Activated CD4-positive, alpha-beta memory T cell treated with anti-CD3 and anti-CD28 coated beads for 36 hours (primary cell): ENCODE measurements at regions of chr2 and their contacts with region 1.

Region 1: GRCh38 chr2:100381240-100381639 is 36.2 kb downstream of the CHST10 start:
- DNase-seq: peak; percentile 79
- H3K4me3 Mint-ChIP-seq: no peak overlapping the region
- H3K27ac Mint-ChIP-seq: no peak overlapping the region
- H3K4me1 Mint-ChIP-seq: peaks cover 2% of the 10 kb centered on the region
- H3K27me3 Mint-ChIP-seq: peaks cover 5% of the 10 kb centered on the region

Region 2: DNA sequence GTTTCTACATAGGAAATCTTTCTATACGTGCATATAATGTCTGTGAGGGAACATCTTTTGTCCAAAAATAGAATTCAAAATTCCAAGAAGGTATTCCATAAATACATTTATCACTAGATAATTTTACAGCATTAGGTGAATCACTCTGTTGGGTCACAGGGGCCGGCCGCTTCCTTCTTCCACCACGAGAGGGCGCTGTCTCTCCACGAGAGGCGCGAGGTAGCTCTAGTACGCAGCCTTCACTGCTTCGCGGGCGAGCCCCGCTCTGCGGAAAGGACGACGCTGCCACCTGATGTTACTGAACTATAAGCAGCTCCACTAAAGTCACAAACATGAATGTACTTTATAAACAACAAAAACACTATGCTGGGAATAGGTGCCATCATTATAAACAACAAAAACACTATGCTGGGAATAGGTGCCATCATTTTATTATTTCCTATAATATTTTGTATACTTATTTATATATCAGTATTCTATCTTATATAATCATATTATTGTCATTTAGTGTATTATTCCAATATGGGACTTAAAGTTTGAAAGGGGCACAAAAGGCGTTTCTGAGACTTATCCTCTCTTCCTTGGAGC is 822.1 kb before region 1 on chr2:
- CTCF ChIA-PET with region 1: interaction called, 20 read pairs
- POLR2A ChIA-PET with region 1: no interaction called
- intact Hi-C with region 1: loop called (anchors 5 kb)
- DNase-seq: peak; percentile 90
- H3K4me3 Mint-ChIP-seq: no peak overlapping the region
- H3K27ac Mint-ChIP-seq: no peak overlapping the region
- H3K4me1 Mint-ChIP-seq: peaks cover 4% of the 10 kb centered on the region
- H3K27me3 Mint-ChIP-seq: no peaks in the 10 kb centered on the region

Region 3: GRCh38 chr2:100262555-100263320 is 118.5 kb before region 1 on chr2:
- CTCF ChIA-PET with region 1: interaction called, 137 read pairs
- POLR2A ChIA-PET with region 1: no interaction called
- intact Hi-C with region 1: loop called (anchors 1 kb)
- DNase-seq: peak; percentile 72
- H3K4me3 Mint-ChIP-seq: no peak overlapping the region
- H3K27ac Mint-ChIP-seq: no peak overlapping the region
- H3K4me1 Mint-ChIP-seq: no peaks in the 10 kb centered on the region
- H3K27me3 Mint-ChIP-seq: no peaks in the 10 kb centered on the region

Region 4: GRCh38 chr2:100291120-100291970 is 89.9 kb before region 1 on chr2:
- CTCF ChIA-PET with region 1: interaction called, 11 read pairs
- POLR2A ChIA-PET with region 1: no interaction called
- intact Hi-C with region 1: no loop called
- DNase-seq: peak; percentile 72
- H3K4me3 Mint-ChIP-seq: no peak overlapping the region
- H3K27ac Mint-ChIP-seq: no peak overlapping the region
- H3K4me1 Mint-ChIP-seq: no peaks in the 10 kb centered on the region
- H3K27me3 Mint-ChIP-seq: peaks cover 7% of the 10 kb centered on the region

Region 5: DNA sequence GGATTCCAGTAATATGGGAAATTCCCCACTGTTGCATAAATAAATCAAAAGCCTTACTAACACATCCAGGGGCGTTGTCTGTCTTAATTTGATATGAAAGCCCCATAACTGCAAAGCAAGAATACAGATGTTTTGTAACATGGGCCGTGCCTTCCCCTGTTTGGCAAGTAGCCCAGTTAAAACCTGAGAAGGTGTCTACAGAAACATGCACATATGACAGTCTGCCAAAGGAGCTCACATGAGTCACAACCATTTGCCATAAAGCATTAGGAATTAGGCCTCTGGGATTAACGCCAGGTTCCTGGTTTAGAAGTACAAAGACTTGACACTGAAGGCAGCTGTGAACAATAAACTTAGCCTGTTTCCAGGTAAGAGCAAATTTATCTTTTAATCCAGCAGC is 15.8 kb before region 1 on chr2:
- CTCF ChIA-PET with region 1: interaction called, 22 read pairs
- POLR2A ChIA-PET with region 1: no interaction called
- intact Hi-C with region 1: no loop called
- DNase-seq: no peak
- H3K4me3 Mint-ChIP-seq: no peak overlapping the region
- H3K27ac Mint-ChIP-seq: no peak overlapping the region
- H3K4me1 Mint-ChIP-seq: no peaks in the 10 kb centered on the region
- H3K27me3 Mint-ChIP-seq: peaks cover 14% of the 10 kb centered on the region

Region 6: DNA sequence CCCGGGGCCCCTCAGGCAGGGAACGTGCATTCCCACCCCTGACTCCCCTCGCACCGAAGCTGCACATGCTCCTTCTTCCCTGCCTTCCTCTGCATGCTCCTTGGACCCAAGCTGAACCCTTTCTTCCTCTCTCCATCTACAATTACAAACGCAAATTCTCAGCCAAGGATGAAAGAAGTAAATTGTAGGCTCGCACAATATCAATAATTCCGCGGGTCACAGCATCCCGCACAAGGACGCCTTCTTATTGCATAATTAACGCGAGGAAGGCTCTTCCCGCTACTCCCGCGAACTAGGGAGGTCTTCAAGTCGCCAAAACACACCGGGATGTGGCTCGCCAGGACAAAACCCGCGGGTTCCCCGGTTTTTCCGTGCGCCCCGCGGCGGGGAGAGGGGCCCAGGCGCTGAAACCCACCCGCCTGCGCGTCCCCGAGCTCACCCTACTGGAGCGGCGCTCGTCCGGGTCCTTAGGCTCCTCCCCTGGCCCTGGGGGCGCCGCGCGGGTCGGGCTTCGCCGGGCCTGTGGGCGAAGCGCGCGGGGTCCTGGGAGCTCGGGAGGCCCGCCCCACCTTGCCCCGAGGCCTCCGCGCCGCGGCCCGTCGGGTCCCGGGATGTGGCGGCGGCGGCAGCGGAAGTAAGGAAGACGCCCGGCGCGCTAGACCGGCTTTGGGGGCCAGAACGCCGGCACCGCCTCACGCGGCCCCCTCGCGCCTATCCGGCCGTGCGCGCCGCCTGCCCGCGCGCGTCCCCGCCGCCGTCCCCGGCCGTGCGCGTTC is 35.9 kb after region 1 on chr2 and contains the start of gene CHST10:
- CTCF ChIA-PET with region 1: interaction called, 11 read pairs
- POLR2A ChIA-PET with region 1: no interaction called
- intact Hi-C with region 1: no loop called
- DNase-seq: peak; percentile 60
- H3K4me3 Mint-ChIP-seq: peak within 1 kb of the TSS; percentile 84
- H3K27ac Mint-ChIP-seq: no peak within 1 kb of the TSS
- H3K4me1 Mint-ChIP-seq: peaks cover 24% of the 10 kb centered on the region
- H3K27me3 Mint-ChIP-seq: peaks cover 9% of the 10 kb centered on the region
- total RNA-seq, gene CHST10: 3.6 to 4.7 TPM

Region 7: DNA sequence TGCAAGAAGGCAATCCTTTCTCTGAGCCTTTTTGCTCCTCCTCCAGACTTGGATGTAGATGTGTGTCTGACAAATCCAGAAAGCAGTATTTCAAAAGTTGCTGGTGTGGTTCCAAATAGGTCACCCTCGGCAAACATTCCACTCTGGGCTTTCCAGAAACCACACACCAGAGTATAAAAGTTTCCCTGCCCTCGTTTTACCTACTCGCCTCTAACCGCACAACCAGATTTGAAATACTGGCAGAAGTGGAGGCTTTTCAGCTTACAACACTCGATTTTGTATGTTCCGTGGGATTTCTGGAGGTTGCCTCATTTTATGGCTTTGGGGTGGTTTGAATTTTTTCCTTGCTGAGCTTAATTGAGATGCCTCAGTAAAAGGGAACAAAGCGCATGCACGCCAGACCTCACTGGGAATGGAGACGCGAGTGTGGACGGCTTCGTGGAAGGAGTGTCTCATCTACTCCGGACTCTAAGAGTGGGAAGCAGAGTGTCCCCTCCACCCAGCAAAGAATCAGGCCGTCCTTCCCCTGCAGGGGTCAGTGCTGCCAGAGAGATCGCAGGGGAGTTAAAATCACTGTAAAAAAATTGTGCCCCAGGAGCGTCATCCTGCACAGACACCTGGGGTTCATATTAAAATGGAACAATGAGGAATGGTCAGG is 576.9 kb after region 1 on chr2:
- CTCF ChIA-PET with region 1: no interaction called
- POLR2A ChIA-PET with region 1: no interaction called
- intact Hi-C with region 1: no loop called
- DNase-seq: no peak
- H3K4me3 Mint-ChIP-seq: no peak overlapping the region
- H3K27ac Mint-ChIP-seq: no peak overlapping the region
- H3K4me1 Mint-ChIP-seq: peaks cover 2% of the 10 kb centered on the region
- H3K27me3 Mint-ChIP-seq: peaks cover 5% of the 10 kb centered on the region